Ovary (tissue), 10 donors: ENCODE measurements at regions of chr20 and their contacts with region 1.

Region 1: DNA sequence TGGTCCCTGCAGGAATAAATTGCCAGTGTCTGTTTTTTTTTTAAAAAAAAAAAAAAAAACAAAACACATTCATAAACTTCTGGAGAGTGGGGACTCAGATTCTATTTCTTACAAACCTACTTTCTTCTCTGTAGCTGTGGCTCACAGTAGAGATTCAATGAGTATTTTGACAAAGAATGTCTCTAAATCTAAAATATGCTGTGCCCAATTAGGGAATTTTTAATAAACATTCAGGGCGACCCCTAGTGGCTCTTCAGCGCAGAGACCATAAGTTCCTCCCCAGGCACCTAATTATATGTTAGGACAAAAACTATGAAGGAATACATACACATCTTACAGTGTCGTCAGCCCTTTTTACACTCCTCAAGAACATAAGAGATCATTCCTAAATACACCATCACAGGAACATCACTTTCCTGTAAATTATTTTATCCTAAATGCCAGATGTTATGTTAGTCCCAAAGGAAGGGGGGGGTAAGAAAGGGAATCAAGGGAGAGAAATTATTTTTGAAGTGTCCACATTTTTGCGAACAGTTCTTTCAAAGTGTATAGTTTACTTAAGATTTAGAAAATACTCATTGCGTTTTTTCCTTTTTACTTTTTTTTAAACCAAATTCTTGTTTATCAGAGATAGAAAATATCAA is 21.8 kb upstream of the NAA20 start:
- DNase-seq: peak in 1 of 5 donors; percentile 59
- H3K4me3 ChIP-seq: no peak overlapping the region
- H3K27ac ChIP-seq: no peak overlapping the region
- H3K4me1 ChIP-seq: peaks cover 7% of the 10 kb centered on the region
- H3K27me3 ChIP-seq: no peaks in the 10 kb centered on the region
- CTCF ChIP-seq: peak; percentile 73 to 81 (median 75)
- EP300 ChIP-seq: no peak
- POLR2A ChIP-seq: no peak

Region 2: GRCh38 chr20:19692685-19693119 is 302.6 kb before region 1 on chr20:
- intact Hi-C with region 1: loop called (anchors 5 to 10 kb)
- DNase-seq: peak; percentile 24 to 76 (median 64)
- H3K4me3 ChIP-seq: no peak overlapping the region
- H3K27ac ChIP-seq: no peak overlapping the region
- H3K4me1 ChIP-seq: no peaks in the 10 kb centered on the region
- H3K27me3 ChIP-seq: no peaks in the 10 kb centered on the region
- CTCF ChIP-seq: peak; percentile 75 to 79 (median 78)
- EP300 ChIP-seq: no peak
- POLR2A ChIP-seq: no peak

Region 3: DNA sequence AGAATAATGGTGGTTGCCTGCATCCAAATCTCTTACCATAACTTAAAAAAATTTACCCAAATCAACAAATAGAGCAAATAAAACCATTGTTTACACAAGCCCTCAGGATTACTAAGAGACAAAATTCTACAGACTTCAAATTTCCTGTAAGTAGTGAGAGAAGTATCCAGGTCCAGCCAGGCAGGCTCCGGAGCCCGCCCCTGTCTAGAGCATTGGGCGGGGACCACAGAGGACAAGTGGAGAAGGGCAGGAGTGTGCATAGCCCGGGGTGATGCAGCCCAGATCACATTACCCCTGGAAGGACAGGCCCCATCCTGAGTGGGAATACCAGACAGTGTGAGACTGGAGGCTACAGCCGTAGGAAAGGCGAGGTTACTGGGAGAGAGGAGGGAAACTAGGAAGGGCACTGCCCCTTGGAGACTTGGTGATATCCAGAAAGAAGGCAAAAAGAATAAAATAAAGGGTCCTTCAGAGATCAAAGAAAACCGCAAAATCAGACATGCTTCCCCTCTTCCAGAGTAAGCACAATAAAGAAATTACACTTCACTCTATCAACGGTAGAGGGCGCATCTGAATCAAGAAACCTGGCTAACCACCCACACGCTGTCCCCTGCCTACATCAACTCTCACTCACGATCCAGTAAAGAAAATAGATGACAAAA is 210.7 kb before region 1 on chr20:
- intact Hi-C with region 1: loop called in 3 of 4 experiments (anchors 2 to 10 kb)
- DNase-seq: peak in 4 of 5 donors; percentile 24 to 47 (median 38)
- H3K4me3 ChIP-seq: no peak overlapping the region
- H3K27ac ChIP-seq: no peak overlapping the region
- H3K4me1 ChIP-seq: peaks cover 9% of the 10 kb centered on the region
- H3K27me3 ChIP-seq: no peaks in the 10 kb centered on the region
- CTCF ChIP-seq: peak; percentile 43 to 76 (median 63)
- EP300 ChIP-seq: no peak
- POLR2A ChIP-seq: no peak

Region 4: DNA sequence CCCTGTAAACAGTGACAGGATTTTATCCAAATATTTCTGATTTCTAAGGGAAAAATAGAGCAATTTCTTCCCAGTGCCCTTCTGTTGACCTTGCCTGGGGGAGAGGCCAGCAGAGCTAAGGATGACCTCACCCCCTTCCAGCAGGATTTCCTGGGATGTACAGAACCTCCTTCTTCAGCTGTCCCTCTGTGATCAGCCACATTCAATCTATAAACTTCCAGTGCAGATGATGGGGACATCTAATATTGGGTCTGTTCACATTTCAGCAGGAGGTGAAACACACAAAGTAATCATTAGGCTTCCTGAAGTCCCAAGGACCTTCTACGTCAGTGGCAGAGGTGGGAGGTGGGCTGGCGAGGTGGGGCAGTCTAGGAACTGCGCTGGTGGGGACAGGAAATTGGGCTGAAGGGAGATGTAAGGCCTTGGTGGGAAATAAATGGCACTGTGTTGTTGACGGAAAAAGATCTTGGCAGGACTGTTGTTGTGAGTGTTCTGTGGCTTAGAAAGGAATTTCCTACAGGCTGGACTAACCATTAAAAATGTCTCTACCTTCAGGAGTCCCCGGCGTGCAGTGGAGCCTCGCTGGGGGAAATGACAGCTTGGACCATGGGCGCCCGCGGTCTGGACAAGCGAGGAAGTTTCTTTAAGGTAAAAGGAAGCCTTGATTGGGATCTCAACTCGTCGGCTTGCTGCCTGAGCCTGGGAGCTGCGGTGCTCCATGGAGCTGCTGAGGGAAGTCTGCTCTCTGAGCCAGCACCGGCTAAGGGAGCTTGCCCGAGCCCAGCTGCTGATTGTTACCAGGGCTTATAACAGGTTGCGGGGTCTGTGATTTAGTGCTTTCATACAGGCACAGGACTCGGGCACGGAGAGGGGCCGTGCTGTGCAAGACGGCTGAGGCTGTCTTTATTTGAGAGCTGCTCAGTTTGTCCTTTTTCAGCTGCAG is 106.1 kb before region 1 on chr20:
- intact Hi-C with region 1: loop called in 2 of 4 experiments (anchors 10 kb)
- DNase-seq: peak; percentile 54 to 73 (median 69)
- H3K4me3 ChIP-seq: peak overlapping the region; percentile 17
- H3K27ac ChIP-seq: peak overlapping the region; percentile 74 to 90
- H3K4me1 ChIP-seq: peaks cover 26% of the 10 kb centered on the region
- H3K27me3 ChIP-seq: no peaks in the 10 kb centered on the region
- CTCF ChIP-seq: no peak
- EP300 ChIP-seq: no peak
- POLR2A ChIP-seq: no peak

Region 5: GRCh38 chr20:19903168-19903811 is 92.1 kb before region 1 on chr20:
- intact Hi-C with region 1: loop called in 2 of 4 experiments (anchors 5 to 10 kb)
- DNase-seq: peak in 3 of 5 donors; percentile 32 to 42 (median 37)
- H3K4me3 ChIP-seq: no peak overlapping the region
- H3K27ac ChIP-seq: no peak overlapping the region
- H3K4me1 ChIP-seq: peaks cover 6% of the 10 kb centered on the region
- H3K27me3 ChIP-seq: no peaks in the 10 kb centered on the region
- CTCF ChIP-seq: peak in 1 of 3 donors; percentile 16
- EP300 ChIP-seq: no peak
- POLR2A ChIP-seq: no peak

Region 6: GRCh38 chr20:19974626-19975435 is 20.5 kb before region 1 on chr20:
- intact Hi-C with region 1: loop called in 1 of 4 experiments (anchors 2 kb)
- DNase-seq: peak; percentile 85 to 90 (median 87)
- H3K4me3 ChIP-seq: peak overlapping the region; percentile 56
- H3K27ac ChIP-seq: peak overlapping the region; percentile 71 to 92
- H3K4me1 ChIP-seq: peaks cover 21% of the 10 kb centered on the region
- H3K27me3 ChIP-seq: no peaks in the 10 kb centered on the region
- CTCF ChIP-seq: no peak
- EP300 ChIP-seq: no peak
- POLR2A ChIP-seq: no peak